PC-9 (cell line): ENCODE measurements at regions of chr1 and their contacts with region 1.

Region 1: DNA sequence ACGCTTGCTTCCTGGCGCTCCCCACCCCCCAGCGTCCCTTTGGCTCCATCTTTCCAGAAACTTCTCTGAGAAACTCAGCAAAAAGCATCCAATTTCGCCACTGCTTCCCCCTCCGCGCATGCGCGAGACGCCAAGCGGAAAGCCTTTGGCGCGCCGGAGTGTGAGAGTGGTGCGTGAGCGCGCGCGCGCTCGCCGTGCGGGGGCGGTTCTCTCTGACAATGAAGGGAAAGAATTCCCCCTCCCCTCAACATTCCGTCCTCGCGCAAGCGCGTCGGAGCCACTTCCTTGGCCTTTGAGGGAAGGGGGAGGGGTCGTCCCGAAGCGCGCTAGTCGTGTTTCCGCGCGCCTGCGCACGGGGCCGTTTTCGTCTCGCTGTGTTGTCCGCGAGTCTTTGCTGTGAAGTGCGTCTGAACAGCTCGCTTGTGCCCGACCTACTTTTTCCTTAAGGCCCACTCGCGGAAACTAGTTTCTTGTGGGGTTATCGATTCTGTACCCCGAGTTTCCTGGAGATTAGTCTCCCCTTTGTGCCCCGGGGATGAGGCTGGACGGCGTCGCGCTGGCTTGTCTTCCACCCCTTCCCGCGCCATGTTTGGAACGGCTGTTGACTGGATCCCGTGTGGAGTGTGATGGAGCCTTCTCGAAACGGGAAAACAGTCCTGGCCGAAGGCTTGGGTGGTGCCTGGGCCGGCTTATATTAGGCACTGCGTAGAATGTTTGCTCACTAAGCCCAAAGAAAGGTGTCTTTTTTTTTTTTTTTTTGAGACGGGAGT is 11.6 kb upstream of the SPEN start:
- DNase-seq: peak; percentile 90 to 98
- H3K4me3 ChIP-seq: peak overlapping the region; percentile 91
- H3K27ac ChIP-seq: peak overlapping the region; percentile 100
- H3K4me1 ChIP-seq: peaks cover 12% of the 10 kb centered on the region
- H3K27me3 ChIP-seq: no peaks in the 10 kb centered on the region
- CTCF ChIP-seq: no peak

Region 2: GRCh38 chr1:15562031-15562729 is 273.7 kb before region 1 on chr1:
- CTCF ChIA-PET with region 1: no interaction called
- POLR2A ChIA-PET with region 1: no interaction called
- intact Hi-C with region 1: no loop called
- DNase-seq: no peak
- H3K4me3 ChIP-seq: no peak overlapping the region
- H3K27ac ChIP-seq: no peak overlapping the region
- H3K4me1 ChIP-seq: peaks cover 36% of the 10 kb centered on the region
- H3K27me3 ChIP-seq: no peaks in the 10 kb centered on the region
- CTCF ChIP-seq: no peak

Region 3: GRCh38 chr1:15678578-15678977 is 157.3 kb before region 1 on chr1:
- CTCF ChIA-PET with region 1: no interaction called
- POLR2A ChIA-PET with region 1: no interaction called
- intact Hi-C with region 1: no loop called
- DNase-seq: peak; percentile 67 to 84
- H3K4me3 ChIP-seq: no peak overlapping the region
- H3K27ac ChIP-seq: peak overlapping the region; percentile 49
- H3K4me1 ChIP-seq: peaks cover 50% of the 10 kb centered on the region
- H3K27me3 ChIP-seq: no peaks in the 10 kb centered on the region
- CTCF ChIP-seq: no peak

Region 4: DNA sequence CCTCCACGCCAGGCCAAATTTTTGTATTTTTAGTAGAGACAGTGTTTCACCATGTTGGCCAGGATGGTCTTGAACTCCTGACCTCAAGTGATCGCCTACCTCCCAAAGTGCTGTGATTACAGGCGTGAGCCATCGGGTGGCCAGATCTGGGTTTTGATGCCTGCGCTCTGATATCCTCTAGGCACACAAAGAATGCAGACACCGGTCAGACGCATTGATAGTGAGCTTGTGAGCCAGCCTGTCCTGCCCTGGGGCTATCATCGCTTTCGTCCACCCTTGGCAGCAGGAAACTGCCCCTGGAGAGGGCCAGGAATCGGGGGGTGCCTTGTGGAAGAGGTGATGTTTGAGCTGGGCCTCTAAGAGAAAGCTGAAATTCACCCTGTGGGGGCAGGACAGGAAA is 73.4 kb before region 1 on chr1:
- CTCF ChIA-PET with region 1: no interaction called
- POLR2A ChIA-PET with region 1: interaction called, 18 read pairs
- intact Hi-C with region 1: no loop called
- DNase-seq: no peak
- H3K4me3 ChIP-seq: no peak overlapping the region
- H3K27ac ChIP-seq: no peak overlapping the region
- H3K4me1 ChIP-seq: peaks cover 17% of the 10 kb centered on the region
- H3K27me3 ChIP-seq: no peaks in the 10 kb centered on the region
- CTCF ChIP-seq: no peak

Region 5: DNA sequence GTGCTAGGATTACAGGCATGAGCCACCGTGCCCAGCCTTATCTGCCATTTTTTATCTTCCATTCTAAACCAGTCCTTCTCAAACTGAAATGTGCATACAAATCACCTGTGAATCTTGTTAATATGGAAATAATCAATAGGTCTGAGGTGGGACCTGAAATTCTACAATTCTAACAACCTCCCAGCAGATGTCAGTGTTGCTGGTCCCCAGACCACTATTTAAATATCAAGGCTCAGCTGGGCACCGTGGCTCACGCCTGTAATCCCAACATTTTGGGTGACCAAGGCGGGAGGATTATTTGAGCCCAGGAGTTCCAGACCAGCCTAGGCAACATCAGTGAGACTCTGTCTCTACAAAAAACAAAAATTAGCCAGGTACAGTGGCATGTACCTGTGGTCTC is 32.6 kb before region 1 on chr1:
- CTCF ChIA-PET with region 1: interaction called, 4 read pairs
- POLR2A ChIA-PET with region 1: interaction called, 14 read pairs
- intact Hi-C with region 1: loop called (anchors 1 kb)
- DNase-seq: no peak
- H3K4me3 ChIP-seq: no peak overlapping the region
- H3K27ac ChIP-seq: no peak overlapping the region
- H3K4me1 ChIP-seq: peaks cover 41% of the 10 kb centered on the region
- H3K27me3 ChIP-seq: no peaks in the 10 kb centered on the region
- CTCF ChIP-seq: peak; percentile 39

Region 6: DNA sequence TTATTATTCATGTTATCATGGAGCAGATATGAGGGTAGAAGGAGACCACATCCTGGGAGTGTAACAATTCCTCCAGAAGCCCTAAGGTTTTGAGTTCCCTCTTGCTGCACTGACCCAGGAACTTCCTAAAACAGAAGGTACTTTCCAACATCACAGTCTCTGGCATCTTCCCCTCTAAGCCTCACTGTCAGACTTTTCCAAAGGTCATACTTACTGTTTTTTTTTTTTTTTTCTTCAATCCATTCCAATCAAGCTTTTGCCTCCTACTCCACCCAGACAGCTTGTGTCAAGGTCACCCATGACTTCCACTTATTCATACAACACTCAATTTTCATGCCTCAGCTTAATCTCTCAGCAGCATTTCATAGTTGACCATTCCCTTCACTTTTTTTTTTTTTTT is 10.1 kb before region 1 on chr1:
- CTCF ChIA-PET with region 1: interaction called, 9 read pairs
- POLR2A ChIA-PET with region 1: interaction called, 17 read pairs
- intact Hi-C with region 1: no loop called
- DNase-seq: no peak
- H3K4me3 ChIP-seq: no peak overlapping the region
- H3K27ac ChIP-seq: no peak overlapping the region
- H3K4me1 ChIP-seq: peaks cover 10% of the 10 kb centered on the region
- H3K27me3 ChIP-seq: no peaks in the 10 kb centered on the region
- CTCF ChIP-seq: no peak

Region 7: DNA sequence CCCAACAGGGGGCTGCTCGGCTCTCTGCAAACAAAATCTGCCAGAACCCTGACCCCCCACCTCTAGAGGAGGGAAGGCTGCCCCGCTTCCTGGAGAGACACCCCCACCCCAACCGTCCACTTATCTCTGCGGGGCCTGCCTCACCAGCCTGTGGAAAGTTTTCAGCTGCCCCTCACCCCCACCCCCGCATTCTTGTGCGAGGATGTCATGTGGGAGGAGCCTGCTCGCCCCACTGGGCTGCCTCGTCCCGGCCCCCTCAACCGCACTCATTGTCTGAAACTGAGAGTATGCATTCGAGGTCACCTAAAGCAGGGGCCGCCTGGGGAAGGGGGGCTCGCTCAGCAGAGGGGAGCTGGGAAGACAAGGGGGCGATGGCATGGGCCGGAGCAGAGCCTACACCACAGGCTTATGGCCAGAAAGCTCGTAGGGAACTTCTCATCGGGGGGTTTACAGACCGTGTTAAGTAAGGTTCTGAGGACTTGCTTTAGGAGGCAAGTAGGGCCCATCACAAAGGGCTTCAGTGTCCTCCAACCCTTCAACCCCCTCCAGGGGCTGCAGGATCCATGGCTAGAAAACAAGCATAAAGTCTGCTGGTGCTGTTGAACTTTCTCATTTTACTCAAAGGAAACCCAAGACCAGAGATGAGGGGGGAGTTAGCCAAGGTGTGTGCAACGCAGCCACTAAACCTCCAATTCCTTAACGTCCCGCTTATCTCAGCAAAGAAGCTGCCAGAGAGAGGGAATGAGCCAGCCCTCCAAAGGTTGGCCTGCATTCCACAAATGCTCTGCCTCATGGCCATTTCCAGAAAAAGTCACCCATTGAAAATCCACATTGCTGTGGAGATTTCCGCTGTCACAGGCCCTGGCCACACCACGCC is 310.6 kb after region 1 on chr1:
- CTCF ChIA-PET with region 1: no interaction called
- POLR2A ChIA-PET with region 1: no interaction called
- intact Hi-C with region 1: loop called (anchors 1 kb)
- DNase-seq: peak; percentile 75 to 90
- H3K4me3 ChIP-seq: peak overlapping the region; percentile 86
- H3K27ac ChIP-seq: peak overlapping the region; percentile 92
- H3K4me1 ChIP-seq: peaks cover 94% of the 10 kb centered on the region
- H3K27me3 ChIP-seq: no peaks in the 10 kb centered on the region
- CTCF ChIP-seq: no peak

Region 8: GRCh38 chr1:17562375-17562774 is 1726.4 kb after region 1 on chr1:
- CTCF ChIA-PET with region 1: no interaction called
- POLR2A ChIA-PET with region 1: interaction called, 27 read pairs
- intact Hi-C with region 1: no loop called
- DNase-seq: no peak
- H3K4me3 ChIP-seq: no peak overlapping the region
- H3K27ac ChIP-seq: peak overlapping the region; percentile 95
- H3K4me1 ChIP-seq: peaks cover 53% of the 10 kb centered on the region
- H3K27me3 ChIP-seq: no peaks in the 10 kb centered on the region
- CTCF ChIP-seq: no peak